HCT116 (cell line): ENCODE measurements at regions of chr19 and their contacts with region 1.

Region 1: GRCh38 chr19:4199699-4200293 is 17.3 kb downstream of the ANKRD24 start:
- DNase-seq: no peak
- ATAC-seq: peak; percentile 87
- H3K4me3 ChIP-seq: peak overlapping the region; percentile 31 to 51
- H3K27ac ChIP-seq: no peak overlapping the region; the same call in 1 of the 2 replicates
- H3K4me1 ChIP-seq: peaks cover 7 to 22% of the 10 kb centered on the region in 2 experiments; a peak in 3 of 4 replicates
- H3K27me3 ChIP-seq: peaks cover 3% of the 10 kb centered on the region; the same call in 1 of the 2 replicates
- CTCF ChIP-seq: peak; percentile 59 to 74 (median 70)
- POLR2A ChIP-seq: no peak
- RAD21 ChIP-seq: peak; percentile 69

Region 2: DNA sequence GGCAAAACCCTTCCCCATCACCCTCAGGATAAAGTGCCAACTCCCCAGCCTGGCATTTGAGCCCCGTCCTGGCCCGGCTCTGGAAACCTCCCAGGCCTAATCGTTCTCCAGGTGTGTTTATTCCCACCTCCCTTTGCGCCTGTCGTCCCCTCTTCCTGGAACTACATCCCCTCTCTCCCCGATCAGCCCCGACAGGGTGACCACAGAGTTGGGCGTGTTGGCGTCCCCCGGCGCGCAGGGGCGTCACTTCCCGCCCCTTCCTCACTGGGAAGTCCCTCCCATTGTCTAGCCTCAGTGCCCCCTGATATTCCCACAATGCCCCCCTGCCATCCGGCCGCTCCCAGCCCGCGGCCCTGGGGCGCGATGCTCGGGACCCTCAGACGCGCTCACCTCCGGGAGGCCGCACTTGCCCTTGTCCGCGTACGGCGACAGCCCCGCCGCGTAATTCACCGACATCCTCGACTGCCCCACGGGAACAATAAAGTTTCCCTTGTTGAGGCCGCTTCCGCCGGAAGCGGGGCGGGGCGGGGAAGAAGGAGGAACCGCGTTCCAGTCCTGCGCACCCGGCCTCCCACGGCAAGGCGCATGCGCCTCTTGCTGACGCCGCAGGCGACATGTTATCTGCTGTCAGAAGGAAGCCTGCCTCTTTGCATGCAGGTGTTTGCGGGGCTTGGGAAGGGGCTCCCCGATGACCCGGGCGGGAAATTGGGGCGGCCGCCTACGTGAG is 17.5 kb before region 1 on chr19 and contains the starts of genes ANKRD24 and SIRT6:
- CTCF ChIA-PET with region 1: interaction called, 13 read pairs
- POLR2A ChIA-PET with region 1: no interaction called
- RAD21 ChIA-PET with region 1: no interaction called
- intact Hi-C with region 1: no loop called
- DNase-seq: peak; percentile 89
- ATAC-seq: peak; percentile 76
- H3K4me3 ChIP-seq: peak within 1 kb of the TSS; percentile 80 to 98
- H3K27ac ChIP-seq: peak within 1 kb of the TSS; percentile 77
- H3K4me1 ChIP-seq: peaks cover 10 to 29% of the 10 kb centered on the region in 2 experiments
- H3K27me3 ChIP-seq: no peaks in the 10 kb centered on the region
- CTCF ChIP-seq: no peak
- POLR2A ChIP-seq: peak; percentile 49
- RAD21 ChIP-seq: no peak
- total RNA-seq, gene ANKRD24: 1.7 TPM
- total RNA-seq, gene SIRT6: 36.3 TPM